ENCODE measurements at regions of chr2 and their contacts with region 1.

Region 1: GRCh38 chr2:19989681-19990415 is at the start of gene WDR35:
- DNase-seq: peak; percentile 94
- ATAC-seq: peak; percentile 91
- H3K4me3 ChIP-seq: peak within 1 kb of the TSS; percentile 85
- H3K27ac ChIP-seq: no peak within 1 kb of the TSS
- H3K4me1 ChIP-seq: peaks cover 19% of the 10 kb centered on the region
- H3K27me3 ChIP-seq: no peaks in the 10 kb centered on the region
- CTCF ChIP-seq: no peak
- total RNA-seq, gene WDR35: 6.6 and 8.9 TPM in 2 replicates

Region 2: DNA sequence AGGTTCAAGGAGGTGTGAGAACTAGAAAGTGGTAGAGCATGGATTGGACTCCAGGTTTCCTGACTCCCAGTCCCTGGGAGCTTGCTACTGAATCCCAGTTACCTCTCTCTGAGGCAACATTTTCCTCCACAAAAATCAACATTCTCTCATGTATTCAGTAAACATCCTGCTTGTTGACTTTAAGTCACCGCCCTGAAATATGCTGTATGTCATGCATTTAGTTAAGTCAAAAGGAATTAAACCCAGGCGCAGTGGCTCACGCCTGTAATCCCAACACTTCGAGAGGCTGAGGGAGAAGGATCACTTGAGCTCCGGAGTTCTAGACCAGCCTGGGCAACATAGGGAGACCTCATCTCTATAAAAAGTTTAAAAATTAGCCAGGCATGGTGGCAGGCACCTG is 18.9 kb after region 1 on chr2:
- CTCF ChIA-PET with region 1: no interaction called
- POLR2A ChIA-PET with region 1: no interaction called
- intact Hi-C with region 1: loop called (anchors 2 kb)
- DNase-seq: peak; percentile 57
- ATAC-seq: peak; percentile 58
- H3K4me3 ChIP-seq: no peak overlapping the region
- H3K27ac ChIP-seq: no peak overlapping the region
- H3K4me1 ChIP-seq: peaks cover 18% of the 10 kb centered on the region
- H3K27me3 ChIP-seq: no peaks in the 10 kb centered on the region
- CTCF ChIP-seq: no peak

Region 3: GRCh38 chr2:20042531-20042930 is 52.7 kb after region 1 on chr2:
- CTCF ChIA-PET with region 1: no interaction called
- POLR2A ChIA-PET with region 1: interaction called, 17 read pairs
- intact Hi-C with region 1: no loop called
- DNase-seq: peak; percentile 16
- ATAC-seq: peak; percentile 28; the same call in 1 of the 2 replicates
- H3K4me3 ChIP-seq: no peak overlapping the region
- H3K27ac ChIP-seq: 0 out of 2 replicates have a peak overlapping the region, but pooled peaks have one; percentile 7
- H3K4me1 ChIP-seq: peaks cover 17% of the 10 kb centered on the region
- H3K27me3 ChIP-seq: no peaks in the 10 kb centered on the region
- CTCF ChIP-seq: no peak

Measured in PC-3 (cell line).